Mammary epithelial cell (primary cell): ENCODE measurements at regions of chr11 and their contacts with region 1.

Region 1: GRCh38 chr11:124012697-124013096 is at the start of gene OR10G4:
- DNase-seq: no peak
- H3K4me3 ChIP-seq: no peak within 1 kb of the TSS
- H3K27ac ChIP-seq: no peak within 1 kb of the TSS
- H3K4me1 ChIP-seq: no peaks in the 10 kb centered on the region
- H3K27me3 ChIP-seq: no peaks in the 10 kb centered on the region
- CTCF ChIP-seq: no peak
- total RNA-seq, gene OR10G4: 0.17 TPM in 1 of 2 donors, not detected in the other

Region 2: DNA sequence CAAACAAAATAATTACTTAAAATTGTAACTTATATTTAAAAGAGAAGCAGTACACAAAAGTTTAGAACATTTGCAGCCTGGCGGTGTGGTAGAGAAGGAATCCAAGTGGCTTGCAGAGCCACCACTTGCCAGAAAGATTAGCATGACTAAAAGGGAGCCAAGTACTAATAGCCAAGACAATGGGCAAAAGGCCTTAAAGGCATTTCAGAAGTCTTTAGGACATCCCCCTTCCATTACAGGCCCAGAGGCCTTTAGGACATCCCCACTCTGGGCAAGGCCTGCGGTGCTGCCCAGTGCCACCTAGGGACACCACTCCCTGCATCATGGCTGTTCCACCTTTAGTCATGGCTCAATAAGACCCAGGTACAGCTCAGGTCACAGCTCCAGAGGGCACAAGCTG is 159.7 kb before region 1 on chr11:
- CTCF ChIA-PET with region 1: no interaction called
- dilution Hi-C with region 1: no loop called
- in situ Hi-C with region 1: no loop called
- intact Hi-C with region 1: loop called (anchors 1 kb)
- DNase-seq: no peak
- H3K4me3 ChIP-seq: no peak overlapping the region
- H3K27ac ChIP-seq: no peak overlapping the region
- H3K4me1 ChIP-seq: peaks cover 4% of the 10 kb centered on the region
- H3K27me3 ChIP-seq: no peaks in the 10 kb centered on the region
- CTCF ChIP-seq: no peak